ENCODE measurements at regions of chr17 and their contacts with region 1.

Region 1: DNA sequence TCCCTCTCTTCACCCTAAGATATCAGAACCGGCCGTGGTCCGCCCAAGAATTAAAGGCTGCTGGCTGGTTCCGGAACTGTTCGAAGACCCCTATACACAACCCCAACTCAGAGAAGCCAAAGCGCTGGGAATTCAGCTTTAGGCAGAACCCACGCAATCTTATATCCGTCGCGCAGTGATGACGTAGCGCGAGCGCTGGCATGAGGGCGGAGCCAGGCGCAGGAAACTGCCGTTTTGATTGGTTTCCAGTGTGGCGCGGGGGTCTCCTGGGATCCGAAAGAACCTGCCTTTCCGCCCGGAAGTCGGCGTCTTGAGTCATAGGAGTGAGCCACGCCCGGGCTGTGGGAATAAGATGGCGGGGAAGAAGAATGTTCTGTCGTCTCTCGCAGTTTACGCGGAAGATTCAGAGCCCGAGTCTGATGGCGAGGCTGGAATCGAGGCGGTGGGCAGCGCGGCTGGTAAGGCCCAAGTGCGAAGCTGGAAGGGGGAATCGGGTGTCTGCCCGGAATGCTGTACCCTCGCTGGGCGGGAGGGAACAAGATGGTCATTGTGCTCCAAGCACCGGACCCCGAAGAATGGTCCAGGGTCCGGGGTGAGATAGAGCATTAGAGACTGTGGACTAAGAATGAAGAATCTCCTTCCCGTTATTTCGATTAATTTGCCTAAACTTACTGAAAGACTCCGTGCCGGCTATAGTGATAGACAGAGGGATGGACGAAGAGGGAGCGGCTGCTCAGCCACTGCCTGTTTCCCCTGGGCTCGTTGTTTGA is at the starts of genes RECQL5 and SAP30BP:
- DNase-seq: peak; percentile 98 to 99
- H3K4me3 ChIP-seq: peak within 1 kb of the TSS; percentile 69 to 88 (median 79)
- H3K27ac ChIP-seq: peak within 1 kb of the TSS; percentile 52 to 80 (median 65)
- H3K4me1 ChIP-seq: peaks cover 16 to 17% of the 10 kb centered on the region in 2 donors
- H3K27me3 ChIP-seq: no peaks in the 10 kb centered on the region
- CTCF ChIP-seq: peak in 1 of 6 experiments; percentile 12
- POLR2A ChIP-seq: peak in 1 of 2 donors; percentile 61
- total RNA-seq, gene RECQL5: 41.9 to 91.8 (median 70.1) TPM
- total RNA-seq, gene SAP30BP: 52.5 to 83.6 (median 72.7) TPM

Region 2: GRCh38 chr17:75845049-75845860 is 178.0 kb after region 1 on chr17:
- intact Hi-C with region 1: loop called (anchors 10 kb)
- DNase-seq: peak; percentile 83 to 89
- H3K4me3 ChIP-seq: no peak overlapping the region
- H3K27ac ChIP-seq: peak overlapping the region; percentile 83 to 94 (median 90)
- H3K4me1 ChIP-seq: peaks cover 25 to 54% of the 10 kb centered on the region in 2 donors
- H3K27me3 ChIP-seq: no peaks in the 10 kb centered on the region
- CTCF ChIP-seq: peak; percentile 82 to 90 (median 88)
- POLR2A ChIP-seq: peak in 1 of 2 donors; percentile 25

Measured in thyroid gland (tissue), 4 donors.